Natural killer cell (primary cell): ENCODE measurements at regions of chr12 and their contacts with region 1.

Region 1: DNA sequence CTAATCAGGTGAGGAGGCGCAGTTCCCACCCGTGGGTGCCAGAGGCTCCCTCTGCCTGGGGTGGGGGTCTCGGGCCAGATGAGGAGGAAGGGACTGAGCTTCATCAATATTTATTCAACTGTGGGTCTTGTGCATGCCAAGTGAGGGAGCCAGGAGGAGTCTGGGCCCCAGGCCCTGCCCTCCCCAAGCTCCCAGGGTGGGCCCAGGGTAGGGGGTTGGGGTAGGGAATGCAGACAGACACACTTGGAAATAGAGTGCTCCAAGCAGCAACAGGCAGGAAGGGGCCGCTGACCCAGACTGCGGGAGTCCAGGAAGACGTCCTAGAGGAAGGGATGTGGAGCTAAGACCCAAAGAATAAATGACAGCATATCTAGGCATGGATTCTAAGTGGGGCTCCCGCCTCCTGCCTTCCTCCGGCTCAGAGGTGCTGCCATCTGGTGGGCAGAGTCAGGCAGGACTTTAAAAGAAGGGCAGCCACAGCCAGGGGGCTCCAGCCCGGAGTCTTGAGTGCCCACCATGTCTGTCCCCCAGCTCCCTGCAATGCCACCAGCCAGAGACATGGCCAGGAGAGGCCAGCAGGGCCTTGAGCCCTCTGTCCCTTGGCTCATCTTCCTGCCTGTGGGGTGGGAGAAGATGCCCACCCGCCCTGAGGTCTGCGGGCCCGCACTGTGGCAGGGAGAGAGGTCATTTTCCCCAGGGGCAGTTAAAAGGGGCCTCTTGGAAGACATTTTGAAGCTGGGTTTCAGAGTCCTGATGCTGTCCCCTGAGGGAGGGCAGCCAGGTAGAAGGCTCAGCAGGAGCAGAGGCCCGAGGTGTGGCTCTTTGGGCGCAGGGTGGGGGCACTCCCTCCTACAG is 70.1 kb downstream of the PHETA1 start:
- DNase-seq: peak in 1 of 2 donors; percentile 66
- ATAC-seq: peak in 1 of 3 donors; percentile 57
- H3K4me3 ChIP-seq: no peak overlapping the region
- H3K4me3 Mint-ChIP-seq: no peak overlapping the region
- H3K27ac ChIP-seq: no peak overlapping the region
- H3K27ac Mint-ChIP-seq: no peak overlapping the region
- H3K4me1 ChIP-seq: no peaks in the 10 kb centered on the region
- H3K4me1 Mint-ChIP-seq: no peaks in the 10 kb centered on the region
- H3K27me3 ChIP-seq: no peaks in the 10 kb centered on the region
- H3K27me3 Mint-ChIP-seq: no peaks in the 10 kb centered on the region
- CTCF ChIP-seq: peak; percentile 52

Region 2: GRCh38 chr12:110937104-110937641 is 361.6 kb before region 1 on chr12:
- intact Hi-C with region 1: loop called (anchors 5 kb)
- DNase-seq: peak; percentile 46 to 77
- ATAC-seq: peak; percentile 64 to 79 (median 74)
- H3K4me3 ChIP-seq: no peak overlapping the region
- H3K4me3 Mint-ChIP-seq: no peak overlapping the region
- H3K27ac ChIP-seq: no peak overlapping the region
- H3K27ac Mint-ChIP-seq: no peak overlapping the region
- H3K4me1 ChIP-seq: peaks cover 8% of the 10 kb centered on the region
- H3K4me1 Mint-ChIP-seq: peaks cover 5 to 6% of the 10 kb centered on the region in 2 donors
- H3K27me3 ChIP-seq: no peaks in the 10 kb centered on the region
- H3K27me3 Mint-ChIP-seq: peaks cover 18 to 21% of the 10 kb centered on the region in 2 donors
- CTCF ChIP-seq: peak; percentile 99